WTC11 (cell line): ENCODE measurements at regions of chr19 and their contacts with region 1.

Region 1: GRCh38 chr19:47013041-47013517 is 6.6 kb upstream of the NPAS1 start:
- DNase-seq: peak; percentile 91
- ATAC-seq: peak; percentile 96
- H3K4me3 Mint-ChIP-seq: no peak overlapping the region; the same call in 1 of the 2 replicates
- H3K27ac Mint-ChIP-seq: peak overlapping the region; percentile 81
- H3K4me1 Mint-ChIP-seq: peaks cover 4% of the 10 kb centered on the region
- H3K27me3 Mint-ChIP-seq: peaks cover 34% of the 10 kb centered on the region
- CTCF ChIP-seq: peak; percentile 98

Region 2: GRCh38 chr19:46791955-46792378 is 221.1 kb before region 1 on chr19:
- CTCF ChIA-PET with region 1: no interaction called
- POLR2A ChIA-PET with region 1: no interaction called
- DNase-seq: no peak
- ATAC-seq: no peak
- H3K4me3 Mint-ChIP-seq: no peak overlapping the region
- H3K27ac Mint-ChIP-seq: no peak overlapping the region
- H3K4me1 Mint-ChIP-seq: peaks cover 7% of the 10 kb centered on the region; the same call in 1 of the 2 replicates
- H3K27me3 Mint-ChIP-seq: peaks cover 16% of the 10 kb centered on the region
- CTCF ChIP-seq: no peak

Region 3: GRCh38 chr19:46975925-46976782 is 36.9 kb before region 1 on chr19:
- CTCF ChIA-PET with region 1: interaction called, 18 read pairs
- POLR2A ChIA-PET with region 1: no interaction called
- DNase-seq: peak; percentile 40
- ATAC-seq: peak; percentile 46
- H3K4me3 Mint-ChIP-seq: 0 out of 2 replicates have a peak overlapping the region, but pooled peaks have one; percentile 2
- H3K27ac Mint-ChIP-seq: peak overlapping the region; percentile 91
- H3K4me1 Mint-ChIP-seq: peaks cover 46% of the 10 kb centered on the region
- H3K27me3 Mint-ChIP-seq: no peaks in the 10 kb centered on the region
- CTCF ChIP-seq: no peak

Region 4: GRCh38 chr19:47028195-47028601 is 15.1 kb after region 1 on chr19:
- CTCF ChIA-PET with region 1: interaction called, 58 read pairs
- POLR2A ChIA-PET with region 1: no interaction called
- DNase-seq: no peak
- ATAC-seq: peak; percentile 35
- H3K4me3 Mint-ChIP-seq: peak overlapping the region; percentile 46; the same call in 1 of the 2 replicates
- H3K27ac Mint-ChIP-seq: no peak overlapping the region
- H3K4me1 Mint-ChIP-seq: peaks cover 16% of the 10 kb centered on the region
- H3K27me3 Mint-ChIP-seq: peaks cover 85% of the 10 kb centered on the region
- CTCF ChIP-seq: no peak

Region 5: GRCh38 chr19:47047763-47048405 is 34.8 kb after region 1 on chr19:
- CTCF ChIA-PET with region 1: interaction called, 11 read pairs
- POLR2A ChIA-PET with region 1: interaction called, 3 read pairs
- DNase-seq: peak; percentile 87
- ATAC-seq: peak; percentile 76
- H3K4me3 Mint-ChIP-seq: peak overlapping the region; percentile 97
- H3K27ac Mint-ChIP-seq: peak overlapping the region; percentile 85; the same call in 1 of the 2 replicates
- H3K4me1 Mint-ChIP-seq: peaks cover 14% of the 10 kb centered on the region
- H3K27me3 Mint-ChIP-seq: peaks cover 8% of the 10 kb centered on the region
- CTCF ChIP-seq: no peak

Region 6: DNA sequence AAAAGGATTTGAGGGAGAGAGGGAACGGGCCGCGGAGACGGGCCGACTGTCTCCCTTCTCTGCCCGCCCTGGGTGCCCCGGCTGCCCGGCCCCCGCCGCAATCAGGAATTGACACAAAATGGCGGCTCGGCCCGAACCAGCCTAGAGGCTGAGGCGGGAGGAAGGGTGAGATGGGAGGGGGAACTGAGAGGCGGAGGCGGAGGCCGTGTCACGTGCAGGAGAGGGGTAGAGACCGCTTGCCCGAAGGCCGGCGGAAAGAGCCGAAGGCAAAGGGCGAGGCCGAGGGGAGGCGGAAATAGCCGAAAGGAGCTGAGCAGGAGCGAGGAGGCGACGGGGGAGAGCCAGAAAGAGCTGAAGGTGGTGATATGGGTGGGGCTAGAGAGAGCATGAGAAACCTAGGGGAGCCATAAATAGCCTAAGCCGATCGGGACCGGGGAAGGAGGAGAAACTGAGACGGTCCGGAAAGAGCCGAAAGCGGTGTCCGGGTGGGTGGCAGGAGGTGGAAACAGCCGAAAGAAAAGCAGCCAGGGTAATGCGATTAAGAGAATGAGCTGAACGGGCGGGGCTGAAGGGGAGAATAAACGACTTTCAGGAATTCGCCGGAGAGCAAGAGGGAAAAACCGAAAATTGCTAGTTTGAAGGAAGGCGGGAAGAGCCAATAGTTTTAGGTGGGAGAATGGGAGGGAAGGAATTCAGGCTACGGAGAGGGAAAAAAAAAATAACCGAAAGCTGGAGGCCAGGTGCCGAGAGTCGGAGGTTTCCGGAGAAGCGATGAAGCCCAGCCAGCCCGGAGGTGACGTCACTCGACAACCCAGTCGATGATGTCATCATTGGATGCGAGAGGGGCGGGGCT is 100.1 kb after region 1 on chr19 and contains the start of gene ZC3H4:
- CTCF ChIA-PET with region 1: interaction called, 20 read pairs
- POLR2A ChIA-PET with region 1: no interaction called
- DNase-seq: peak; percentile 100
- ATAC-seq: peak; percentile 94
- H3K4me3 Mint-ChIP-seq: peak within 1 kb of the TSS; percentile 91
- H3K27ac Mint-ChIP-seq: peak within 1 kb of the TSS; percentile 99
- H3K4me1 Mint-ChIP-seq: peaks cover 28% of the 10 kb centered on the region
- H3K27me3 Mint-ChIP-seq: no peaks in the 10 kb centered on the region
- CTCF ChIP-seq: no peak
- total RNA-seq, gene ZC3H4: 67.2 to 75.5 TPM (median 73.2 TPM) in 3 replicates

Region 7: DNA sequence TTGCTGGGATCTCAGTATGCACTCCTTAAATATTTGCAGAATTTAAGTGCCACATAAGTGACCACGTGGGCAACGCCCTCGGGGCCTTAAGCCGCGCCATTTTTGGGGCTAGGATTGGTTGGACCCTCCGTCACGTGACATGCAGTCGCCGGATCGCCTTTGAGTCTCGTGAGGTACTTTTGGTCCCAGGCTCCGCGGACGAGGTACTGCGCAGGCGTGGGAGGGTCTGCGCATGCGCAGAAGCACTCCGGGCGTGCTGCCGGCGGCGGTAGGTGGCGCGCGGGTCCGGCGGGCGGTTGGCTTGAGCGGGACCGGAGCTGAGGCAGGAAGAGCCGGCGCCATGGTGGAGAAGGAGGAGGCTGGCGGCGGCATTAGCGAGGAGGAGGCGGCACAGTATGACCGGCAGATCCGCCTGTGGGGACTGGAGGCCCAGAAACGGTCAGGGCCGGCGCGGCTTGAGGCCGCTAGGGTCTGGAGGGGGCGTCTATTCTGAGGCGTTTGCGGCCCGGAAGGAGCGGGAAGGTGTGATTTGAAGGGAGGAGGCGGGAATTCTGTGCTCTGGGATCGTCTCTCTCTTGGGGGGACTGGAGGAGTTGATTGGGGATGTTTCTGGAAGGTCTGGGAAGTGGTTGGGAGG is 117.6 kb after region 1 on chr19 and contains the start of gene SAE1:
- CTCF ChIA-PET with region 1: interaction called, 20 read pairs
- POLR2A ChIA-PET with region 1: no interaction called
- DNase-seq: peak; percentile 97
- ATAC-seq: peak; percentile 88
- H3K4me3 Mint-ChIP-seq: peak within 1 kb of the TSS; percentile 96
- H3K27ac Mint-ChIP-seq: peak within 1 kb of the TSS; percentile 95
- H3K4me1 Mint-ChIP-seq: peaks cover 38% of the 10 kb centered on the region
- H3K27me3 Mint-ChIP-seq: peaks cover 11% of the 10 kb centered on the region
- CTCF ChIP-seq: no peak
- total RNA-seq, gene SAE1: 215 to 224 TPM (median 221 TPM) in 3 replicates